HAP-1 (cell line): ENCODE measurements at regions of chr4 and their contacts with region 1.

Region 1: GRCh38 chr4:48949518-48950219 is 36.4 kb upstream of the CWH43 start:
- DNase-seq: no peak
- H3K4me3 ChIP-seq: no peak overlapping the region
- H3K4me1 ChIP-seq: peaks cover 8% of the 10 kb centered on the region
- H3K27me3 ChIP-seq: no peaks in the 10 kb centered on the region

Region 2: DNA sequence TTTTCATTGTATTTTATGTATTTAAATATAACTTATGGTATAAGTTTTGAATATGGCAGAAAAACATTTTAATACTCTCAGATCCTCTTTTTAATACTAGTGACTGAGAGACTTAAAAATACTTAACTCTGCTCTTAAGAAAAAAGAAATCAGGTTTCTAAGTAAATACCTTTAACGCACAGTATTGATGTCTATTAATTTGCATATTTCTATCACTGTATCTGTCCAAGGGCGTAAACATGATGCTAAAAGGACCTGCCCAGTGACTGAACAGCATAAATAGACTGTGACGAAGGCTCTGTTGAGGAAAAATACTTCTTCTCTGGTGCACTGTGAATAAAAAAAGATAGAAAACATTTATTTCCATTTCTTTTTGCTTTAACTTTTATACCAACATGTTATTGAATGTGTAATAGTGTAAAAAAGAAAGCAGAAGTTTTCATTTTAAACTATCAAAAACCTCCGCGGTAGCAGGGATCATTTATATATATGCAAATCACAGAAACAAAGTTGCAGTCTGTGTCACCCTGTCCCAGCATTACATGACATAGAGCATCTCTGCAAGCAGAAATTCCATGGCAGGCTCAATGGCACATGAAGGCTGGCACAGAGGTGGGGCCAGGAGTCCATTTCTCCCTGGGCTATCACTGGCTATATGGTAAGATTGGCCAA is 384.2 kb before region 1 on chr4:
- in situ Hi-C with region 1: loop called (anchors 10 kb)
- DNase-seq: no peak
- H3K4me3 ChIP-seq: no peak overlapping the region
- H3K4me1 ChIP-seq: no peaks in the 10 kb centered on the region
- H3K27me3 ChIP-seq: no peaks in the 10 kb centered on the region